Upper lobe of right lung (tissue), 1 donor: ENCODE measurements at regions of chr12 and their contacts with region 1.

Region 1: GRCh38 chr12:12376646-12377448 is 20.0 kb downstream of the BORCS5 start:
- DNase-seq: no peak
- ATAC-seq: peak; percentile 95
- H3K4me3 ChIP-seq: no peak overlapping the region
- H3K27ac ChIP-seq: no peak overlapping the region
- H3K4me1 ChIP-seq: peaks cover 11% of the 10 kb centered on the region
- H3K27me3 ChIP-seq: no peaks in the 10 kb centered on the region
- CTCF ChIP-seq: peak; percentile 76

Region 2: GRCh38 chr12:12171991-12172521 is 204.8 kb before region 1 on chr12:
- intact Hi-C with region 1: no loop called
- DNase-seq: no peak
- ATAC-seq: no peak
- H3K4me3 ChIP-seq: no peak overlapping the region
- H3K27ac ChIP-seq: no peak overlapping the region
- H3K4me1 ChIP-seq: no peaks in the 10 kb centered on the region
- H3K27me3 ChIP-seq: no peaks in the 10 kb centered on the region
- CTCF ChIP-seq: no peak

Region 3: GRCh38 chr12:12564911-12565310 is 188.1 kb after region 1 on chr12:
- intact Hi-C with region 1: loop called (anchors 5 kb)
- DNase-seq: no peak
- ATAC-seq: no peak
- H3K4me3 ChIP-seq: no peak overlapping the region
- H3K27ac ChIP-seq: no peak overlapping the region
- H3K4me1 ChIP-seq: peaks cover 10% of the 10 kb centered on the region
- H3K27me3 ChIP-seq: no peaks in the 10 kb centered on the region
- CTCF ChIP-seq: no peak

Region 4: DNA sequence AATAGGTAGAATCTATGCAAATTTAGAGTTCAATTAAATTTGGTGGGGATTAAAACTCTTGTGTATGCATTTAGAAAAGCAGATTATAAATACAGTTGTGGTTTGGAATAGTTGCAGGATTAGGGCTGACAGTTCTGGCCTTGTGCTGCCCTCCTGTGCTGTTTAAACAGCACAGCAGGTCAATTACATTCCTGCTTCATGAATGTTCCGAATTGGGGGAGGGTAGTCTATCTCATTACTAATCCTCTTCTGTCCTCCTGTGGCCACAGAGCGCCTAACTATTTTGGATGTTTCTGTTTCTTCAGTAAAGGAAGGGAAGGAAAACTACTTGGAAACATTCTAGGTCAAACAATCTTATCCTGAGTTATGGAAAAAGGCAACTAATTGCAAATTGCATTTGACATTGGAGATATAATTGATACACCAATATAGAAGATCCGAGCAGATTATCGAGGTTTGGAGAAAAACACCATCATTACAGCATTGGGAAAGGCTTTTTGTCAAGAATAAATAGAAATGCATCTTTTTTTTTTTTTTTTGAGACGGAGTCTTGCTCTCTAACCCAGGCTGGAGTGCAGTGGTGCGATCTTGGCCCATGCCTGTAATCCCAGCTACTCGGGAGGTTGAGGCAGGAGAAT is 327.9 kb after region 1 on chr12:
- intact Hi-C with region 1: loop called (anchors 10 kb)
- DNase-seq: no peak
- ATAC-seq: peak; percentile 99
- H3K4me3 ChIP-seq: no peak overlapping the region
- H3K27ac ChIP-seq: no peak overlapping the region
- H3K4me1 ChIP-seq: peaks cover 5% of the 10 kb centered on the region
- H3K27me3 ChIP-seq: no peaks in the 10 kb centered on the region
- CTCF ChIP-seq: peak; percentile 90

Region 5: DNA sequence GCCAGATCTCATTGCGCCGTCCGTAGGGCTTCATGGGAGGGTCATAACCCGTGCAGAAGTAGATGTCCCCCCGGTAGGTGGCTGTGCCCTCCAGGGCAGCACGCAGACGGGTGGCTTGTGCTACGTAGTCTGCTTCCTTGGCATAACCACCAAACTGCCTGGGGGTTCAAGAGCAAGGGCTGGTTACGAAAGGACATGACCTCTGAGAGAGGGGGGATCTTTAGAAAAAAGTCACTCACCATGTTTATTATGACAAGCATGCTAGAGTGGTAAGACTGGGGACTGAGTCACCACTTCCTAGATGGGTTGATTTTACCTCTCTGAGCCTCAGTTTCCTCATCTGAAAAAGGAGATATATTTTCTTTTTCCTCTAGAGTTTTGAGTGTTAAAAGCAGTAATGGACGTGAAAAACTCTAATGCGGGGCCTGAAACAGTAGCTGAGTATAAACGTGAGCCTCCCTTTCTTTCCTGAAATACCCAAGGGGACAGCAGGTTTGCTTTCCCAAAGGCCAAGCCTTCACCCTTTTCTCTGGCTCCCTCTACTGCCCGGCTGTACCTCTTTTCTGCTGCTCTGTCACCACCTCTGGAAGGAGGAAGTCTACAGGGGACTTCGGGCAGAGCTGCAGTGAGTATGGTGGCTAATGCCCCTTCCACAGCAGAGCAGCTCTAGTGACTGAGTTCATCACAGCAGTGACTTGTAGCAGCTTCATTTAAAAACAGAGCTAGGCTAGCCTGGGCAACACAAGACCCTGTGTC is 598.7 kb after region 1 on chr12:
- intact Hi-C with region 1: no loop called
- DNase-seq: no peak
- ATAC-seq: peak; percentile 81
- H3K4me3 ChIP-seq: no peak overlapping the region
- H3K27ac ChIP-seq: no peak overlapping the region
- H3K4me1 ChIP-seq: peaks cover 5% of the 10 kb centered on the region
- H3K27me3 ChIP-seq: no peaks in the 10 kb centered on the region
- CTCF ChIP-seq: peak; percentile 32